ENCODE measurements at regions of chr19 and their contacts with region 1.

Region 1: DNA sequence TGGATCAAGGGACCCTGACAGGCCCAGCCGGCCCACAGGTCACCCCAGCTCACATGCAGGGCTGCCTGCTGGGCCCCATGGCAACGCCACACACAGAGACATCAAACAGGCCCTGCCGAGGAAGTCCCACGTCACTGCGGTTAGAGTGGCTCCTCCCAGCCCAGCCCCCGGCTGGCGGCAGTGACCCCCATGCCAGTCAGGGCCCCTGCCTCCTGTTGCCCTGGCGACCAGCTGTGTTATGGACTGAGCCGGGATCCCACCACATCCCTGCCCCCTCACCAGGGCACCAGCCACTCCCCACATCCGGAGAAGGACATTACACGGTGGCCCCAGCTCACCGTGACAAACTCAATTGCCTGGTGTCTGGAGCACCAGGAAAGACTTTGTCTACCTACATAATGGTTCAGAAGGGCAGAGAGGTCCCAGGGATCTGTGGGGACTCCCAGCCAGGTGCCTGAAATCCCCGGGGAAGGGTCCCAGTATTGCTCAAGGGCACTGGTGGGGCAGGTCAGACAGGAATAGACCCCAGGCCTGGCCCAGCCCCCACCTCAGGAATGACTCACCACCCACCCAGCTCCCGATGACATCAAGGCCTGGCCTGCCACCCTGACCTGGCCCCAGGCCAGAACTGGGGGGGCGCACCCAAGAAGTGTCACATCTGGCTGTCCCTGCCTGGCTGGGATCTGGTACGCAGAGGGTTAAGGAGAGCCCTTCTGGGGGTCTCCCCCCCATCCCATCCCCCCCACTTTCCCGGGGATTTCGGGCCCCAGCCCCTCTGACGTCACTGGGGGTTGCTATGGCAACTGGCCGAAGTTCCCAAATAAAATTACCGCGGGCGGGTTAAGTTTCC is 30.2 kb upstream of the NANOS3 start:
- DNase-seq: peak; percentile 78 to 97
- ATAC-seq: peak; percentile 49 to 52
- H3K4me3 ChIP-seq: peak overlapping the region; percentile 41
- H3K27ac ChIP-seq: peak overlapping the region; percentile 100
- H3K4me1 ChIP-seq: peaks cover 71% of the 10 kb centered on the region
- CTCF ChIP-seq: no peak
- EP300 ChIP-seq: peak; percentile 28 to 47; a peak in 3 of 5 replicates
- POLR2A ChIP-seq: 0 out of 2 replicates have a peak, but pooled peaks have one; percentile 18
- RAD21 ChIP-seq: 0 out of 5 replicates have a peak, but pooled peaks of 1 of the 2 experiments have one; percentile 5

Region 2: DNA sequence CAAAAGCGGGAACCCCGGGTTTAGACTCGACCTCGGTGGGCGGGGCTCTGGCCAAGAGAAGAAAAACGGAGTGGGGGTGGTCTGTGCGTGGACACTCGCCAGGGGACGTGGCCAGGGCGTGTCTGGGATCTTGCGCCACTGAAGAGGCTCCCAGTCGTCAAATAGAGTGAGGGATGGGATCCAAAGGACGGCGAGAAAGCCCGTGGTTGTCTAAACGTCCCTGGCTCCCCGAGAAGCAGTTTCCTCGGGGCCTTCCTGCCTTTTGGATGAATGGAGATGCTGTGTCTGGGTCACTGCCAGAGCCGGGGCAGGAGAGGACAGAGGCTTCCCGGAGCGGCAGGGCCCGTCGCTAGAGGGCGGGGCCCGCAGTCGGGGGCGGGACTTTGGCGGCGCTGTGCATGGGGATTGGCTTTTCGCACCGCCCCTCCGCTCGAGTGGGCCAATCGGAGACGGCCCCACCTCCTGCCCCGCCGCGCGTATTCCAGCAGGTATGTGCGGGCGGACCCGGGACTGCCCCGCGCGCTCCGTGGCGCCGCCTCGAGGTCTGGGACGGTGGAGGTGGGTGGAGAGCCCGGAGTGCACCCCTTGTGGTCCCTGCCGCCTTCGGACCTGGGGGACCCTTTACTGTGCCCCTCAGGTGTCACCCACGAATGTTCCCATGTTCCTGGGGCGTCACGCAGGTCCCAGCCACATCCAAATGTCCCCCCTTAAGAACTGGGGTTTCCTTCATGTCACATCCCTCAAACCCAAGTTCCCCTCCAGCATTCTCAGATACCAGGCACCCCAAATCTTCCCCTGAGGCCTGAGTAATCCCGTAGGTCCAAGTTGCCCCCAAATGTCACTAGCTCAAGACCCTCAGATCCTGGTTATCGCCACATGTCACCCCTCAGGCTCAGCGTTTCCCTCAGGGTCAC is 13.2 kb before region 1 on chr19:
- CTCF ChIA-PET with region 1: interaction called, 271 read pairs
- POLR2A ChIA-PET with region 1: interaction called, 15 read pairs
- DNase-seq: peak; percentile 62 to 91
- ATAC-seq: peak; percentile 44
- H3K4me3 ChIP-seq: 0 out of 3 replicates have a peak overlapping the region, but pooled peaks have one; percentile 6
- H3K27ac ChIP-seq: peak overlapping the region; percentile 100
- H3K4me1 ChIP-seq: peaks cover 55% of the 10 kb centered on the region
- CTCF ChIP-seq: no peak; the same call in 2 of the 3 replicates
- EP300 ChIP-seq: no peak
- POLR2A ChIP-seq: no peak
- RAD21 ChIP-seq: peak; percentile 20 to 31; a peak in 2 of 5 replicates